ENCODE measurements at regions of chr12 and their contacts with region 1.

Region 1: GRCh38 chr12:42023733-42024494 is 120.8 kb downstream of the GXYLT1 start:
- DNase-seq: peak; percentile 41 to 73 (median 60)
- ATAC-seq: peak; percentile 86
- H3K4me3 ChIP-seq: peak overlapping the region; percentile 39
- H3K4me3 Mint-ChIP-seq: peak overlapping the region; percentile 67 to 86 (median 78)
- H3K27ac ChIP-seq: no peak overlapping the region
- H3K27ac Mint-ChIP-seq: peak overlapping the region in 3 of 9 donors; percentile 6 to 53 (median 14)
- H3K4me1 ChIP-seq: no peaks in the 10 kb centered on the region
- H3K4me1 Mint-ChIP-seq: peaks cover 0 to 14% (median 10%) of the 10 kb centered on the region in 7 donors
- H3K27me3 ChIP-seq: no peaks in the 10 kb centered on the region
- H3K27me3 Mint-ChIP-seq: peaks cover 12 to 15% (median 12%) of the 10 kb centered on the region in 5 donors

Region 2: GRCh38 chr12:40946612-40947194 is 1077.2 kb before region 1 on chr12:
- CTCF ChIA-PET with region 1: no interaction called
- POLR2A ChIA-PET with region 1: no interaction called
- intact Hi-C with region 1: loop called in 1 of 2 experiments (anchors 1 kb)
- DNase-seq: peak in 5 of 9 donors; percentile 3 to 18 (median 14)
- ATAC-seq: no peak
- H3K4me3 ChIP-seq: no peak overlapping the region
- H3K4me3 Mint-ChIP-seq: no peak overlapping the region
- H3K27ac ChIP-seq: no peak overlapping the region
- H3K27ac Mint-ChIP-seq: no peak overlapping the region
- H3K4me1 ChIP-seq: no peaks in the 10 kb centered on the region
- H3K4me1 Mint-ChIP-seq: no peaks in the 10 kb centered on the region
- H3K27me3 ChIP-seq: no peaks in the 10 kb centered on the region
- H3K27me3 Mint-ChIP-seq: peaks cover 0 to 9% (median 5%) of the 10 kb centered on the region in 5 donors

Region 3: GRCh38 chr12:41277116-41277945 is 746.6 kb before region 1 on chr12:
- CTCF ChIA-PET with region 1: interaction called, 4 read pairs
- POLR2A ChIA-PET with region 1: no interaction called
- intact Hi-C with region 1: loop called in 1 of 2 experiments (anchors 1 kb)
- DNase-seq: peak in 5 of 9 donors; percentile 4 to 9 (median 6)
- ATAC-seq: peak; percentile 49
- H3K4me3 ChIP-seq: no peak overlapping the region
- H3K4me3 Mint-ChIP-seq: no peak overlapping the region
- H3K27ac ChIP-seq: no peak overlapping the region
- H3K27ac Mint-ChIP-seq: no peak overlapping the region
- H3K4me1 ChIP-seq: no peaks in the 10 kb centered on the region
- H3K4me1 Mint-ChIP-seq: no peaks in the 10 kb centered on the region
- H3K27me3 ChIP-seq: peaks cover 0 to 4% of the 10 kb centered on the region in 2 donors
- H3K27me3 Mint-ChIP-seq: peaks cover 0 to 12% (median 8%) of the 10 kb centered on the region in 5 donors

Region 4: GRCh38 chr12:42002563-42002962 is 21.4 kb before region 1 on chr12:
- CTCF ChIA-PET with region 1: interaction called, 11 read pairs
- POLR2A ChIA-PET with region 1: no interaction called
- intact Hi-C with region 1: no loop called
- DNase-seq: no peak
- ATAC-seq: no peak
- H3K4me3 ChIP-seq: no peak overlapping the region
- H3K4me3 Mint-ChIP-seq: no peak overlapping the region
- H3K27ac ChIP-seq: no peak overlapping the region
- H3K27ac Mint-ChIP-seq: no peak overlapping the region
- H3K4me1 ChIP-seq: no peaks in the 10 kb centered on the region
- H3K4me1 Mint-ChIP-seq: no peaks in the 10 kb centered on the region
- H3K27me3 ChIP-seq: no peaks in the 10 kb centered on the region
- H3K27me3 Mint-ChIP-seq: peaks cover 0 to 16% (median 5%) of the 10 kb centered on the region in 5 donors

Region 5: GRCh38 chr12:42053456-42053855 is 29.5 kb after region 1 on chr12:
- CTCF ChIA-PET with region 1: no interaction called
- POLR2A ChIA-PET with region 1: no interaction called
- intact Hi-C with region 1: no loop called
- DNase-seq: no peak
- ATAC-seq: no peak
- H3K4me3 ChIP-seq: no peak overlapping the region
- H3K4me3 Mint-ChIP-seq: no peak overlapping the region
- H3K27ac ChIP-seq: no peak overlapping the region
- H3K27ac Mint-ChIP-seq: no peak overlapping the region
- H3K4me1 ChIP-seq: no peaks in the 10 kb centered on the region
- H3K4me1 Mint-ChIP-seq: peaks cover 0 to 4% (median 0%) of the 10 kb centered on the region in 7 donors
- H3K27me3 ChIP-seq: no peaks in the 10 kb centered on the region
- H3K27me3 Mint-ChIP-seq: peaks cover 14 to 32% (median 21%) of the 10 kb centered on the region in 5 donors

Region 6: GRCh38 chr12:42372154-42372791 is 348.4 kb after region 1 on chr12:
- CTCF ChIA-PET with region 1: no interaction called
- POLR2A ChIA-PET with region 1: no interaction called
- intact Hi-C with region 1: loop called in 1 of 2 experiments (anchors 10 kb)
- DNase-seq: peak in 7 of 9 donors; percentile 26 to 61 (median 49)
- ATAC-seq: peak; percentile 93
- H3K4me3 ChIP-seq: no peak overlapping the region
- H3K4me3 Mint-ChIP-seq: no peak overlapping the region
- H3K27ac ChIP-seq: no peak overlapping the region
- H3K27ac Mint-ChIP-seq: no peak overlapping the region
- H3K4me1 ChIP-seq: no peaks in the 10 kb centered on the region
- H3K4me1 Mint-ChIP-seq: peaks cover 4 to 32% (median 15%) of the 10 kb centered on the region in 7 donors
- H3K27me3 ChIP-seq: no peaks in the 10 kb centered on the region
- H3K27me3 Mint-ChIP-seq: no peaks in the 10 kb centered on the region

Region 7: GRCh38 chr12:42426746-42427145 is 402.8 kb after region 1 on chr12:
- CTCF ChIA-PET with region 1: no interaction called
- POLR2A ChIA-PET with region 1: no interaction called
- intact Hi-C with region 1: no loop called
- DNase-seq: no peak
- ATAC-seq: no peak
- H3K4me3 ChIP-seq: no peak overlapping the region
- H3K4me3 Mint-ChIP-seq: no peak overlapping the region
- H3K27ac ChIP-seq: no peak overlapping the region
- H3K27ac Mint-ChIP-seq: peak overlapping the region in 1 of 9 donors; percentile 5
- H3K4me1 ChIP-seq: no peaks in the 10 kb centered on the region
- H3K4me1 Mint-ChIP-seq: peaks cover 4 to 20% (median 11%) of the 10 kb centered on the region in 7 donors
- H3K27me3 ChIP-seq: no peaks in the 10 kb centered on the region
- H3K27me3 Mint-ChIP-seq: no peaks in the 10 kb centered on the region

Region 8: DNA sequence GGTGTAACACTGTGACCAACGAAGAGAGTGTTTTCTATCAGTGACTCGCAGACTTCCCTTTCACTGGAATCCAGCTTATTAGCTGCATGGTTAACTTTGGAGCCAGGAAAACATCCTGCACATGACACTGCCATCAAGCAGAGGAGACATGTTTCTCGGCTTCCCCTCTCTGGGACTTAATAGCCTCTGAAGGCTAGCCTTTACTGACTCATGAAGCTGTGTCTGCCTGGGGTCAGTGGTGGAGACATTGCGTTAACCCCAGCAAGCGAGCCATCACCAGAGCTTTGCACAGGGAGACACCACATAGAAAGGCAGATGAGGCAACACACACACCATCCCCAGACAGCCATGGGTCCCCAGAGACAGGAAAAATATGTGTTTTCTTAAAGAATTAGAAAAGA is 692.6 kb after region 1 on chr12:
- CTCF ChIA-PET with region 1: no interaction called
- POLR2A ChIA-PET with region 1: no interaction called
- intact Hi-C with region 1: no loop called
- DNase-seq: no peak
- ATAC-seq: no peak
- H3K4me3 ChIP-seq: no peak overlapping the region
- H3K4me3 Mint-ChIP-seq: no peak overlapping the region
- H3K27ac ChIP-seq: no peak overlapping the region
- H3K27ac Mint-ChIP-seq: no peak overlapping the region
- H3K4me1 ChIP-seq: no peaks in the 10 kb centered on the region
- H3K4me1 Mint-ChIP-seq: no peaks in the 10 kb centered on the region
- H3K27me3 ChIP-seq: no peaks in the 10 kb centered on the region
- H3K27me3 Mint-ChIP-seq: no peaks in the 10 kb centered on the region